Naive thymus-derived CD4-positive, alpha-beta T cell (primary cell): ENCODE measurements at regions of chr14 and their contacts with region 1.

Region 1: GRCh38 chr14:68788996-68789820 is 3.7 kb downstream of the ZFP36L1 start:
- DNase-seq: peak; percentile 70 to 91 (median 88)
- ATAC-seq: peak; percentile 64
- H3K4me3 ChIP-seq: peak overlapping the region; percentile 91
- H3K4me3 Mint-ChIP-seq: peak overlapping the region; percentile 92 to 99 (median 95)
- H3K27ac ChIP-seq: peak overlapping the region; percentile 100
- H3K27ac Mint-ChIP-seq: peak overlapping the region; percentile 91 to 100 (median 99)
- H3K4me1 ChIP-seq: peaks cover 37 to 43% of the 10 kb centered on the region in 2 donors
- H3K4me1 Mint-ChIP-seq: peaks cover 43 to 61% (median 50%) of the 10 kb centered on the region in 7 donors
- H3K27me3 ChIP-seq: no peaks in the 10 kb centered on the region
- H3K27me3 Mint-ChIP-seq: peaks cover 0 to 2% (median 0%) of the 10 kb centered on the region in 5 donors

Region 2: GRCh38 chr14:67446120-67447032 is 1342.8 kb before region 1 on chr14:
- CTCF ChIA-PET with region 1: no interaction called
- POLR2A ChIA-PET with region 1: no interaction called
- intact Hi-C with region 1: no loop called
- DNase-seq: no peak
- ATAC-seq: no peak
- H3K4me3 ChIP-seq: no peak overlapping the region
- H3K4me3 Mint-ChIP-seq: no peak overlapping the region
- H3K27ac ChIP-seq: no peak overlapping the region
- H3K27ac Mint-ChIP-seq: no peak overlapping the region
- H3K4me1 ChIP-seq: no peaks in the 10 kb centered on the region
- H3K4me1 Mint-ChIP-seq: no peaks in the 10 kb centered on the region
- H3K27me3 ChIP-seq: no peaks in the 10 kb centered on the region
- H3K27me3 Mint-ChIP-seq: peaks cover 0 to 34% (median 3%) of the 10 kb centered on the region in 5 donors

Region 3: GRCh38 chr14:68261092-68261842 is 527.9 kb before region 1 on chr14:
- CTCF ChIA-PET with region 1: interaction called, 219 read pairs
- POLR2A ChIA-PET with region 1: interaction called, 203 read pairs
- intact Hi-C with region 1: no loop called
- DNase-seq: peak in 4 of 9 donors; percentile 23 to 32 (median 29)
- ATAC-seq: peak; percentile 41
- H3K4me3 ChIP-seq: peak overlapping the region; percentile 10
- H3K4me3 Mint-ChIP-seq: peak overlapping the region in 9 of 10 donors; percentile 59 to 83 (median 75)
- H3K27ac ChIP-seq: peak overlapping the region; percentile 64
- H3K27ac Mint-ChIP-seq: peak overlapping the region; percentile 73 to 99 (median 92)
- H3K4me1 ChIP-seq: peaks cover 0 to 49% of the 10 kb centered on the region in 2 donors
- H3K4me1 Mint-ChIP-seq: peaks cover 41 to 85% (median 80%) of the 10 kb centered on the region in 7 donors
- H3K27me3 ChIP-seq: no peaks in the 10 kb centered on the region
- H3K27me3 Mint-ChIP-seq: no peaks in the 10 kb centered on the region

Region 4: GRCh38 chr14:68377459-68377858 is 411.7 kb before region 1 on chr14:
- CTCF ChIA-PET with region 1: interaction called, 16 read pairs
- POLR2A ChIA-PET with region 1: interaction called, 13 read pairs
- intact Hi-C with region 1: loop called in 1 of 2 experiments (anchors 1 kb)
- DNase-seq: no peak
- ATAC-seq: peak; percentile 62
- H3K4me3 ChIP-seq: no peak overlapping the region
- H3K4me3 Mint-ChIP-seq: peak overlapping the region in 7 of 10 donors; percentile 29 to 72 (median 59)
- H3K27ac ChIP-seq: peak overlapping the region; percentile 37
- H3K27ac Mint-ChIP-seq: peak overlapping the region in 7 of 9 donors; percentile 69 to 89 (median 81)
- H3K4me1 ChIP-seq: peaks cover 0 to 38% of the 10 kb centered on the region in 2 donors
- H3K4me1 Mint-ChIP-seq: peaks cover 30 to 84% (median 72%) of the 10 kb centered on the region in 7 donors
- H3K27me3 ChIP-seq: no peaks in the 10 kb centered on the region
- H3K27me3 Mint-ChIP-seq: no peaks in the 10 kb centered on the region

Region 5: DNA sequence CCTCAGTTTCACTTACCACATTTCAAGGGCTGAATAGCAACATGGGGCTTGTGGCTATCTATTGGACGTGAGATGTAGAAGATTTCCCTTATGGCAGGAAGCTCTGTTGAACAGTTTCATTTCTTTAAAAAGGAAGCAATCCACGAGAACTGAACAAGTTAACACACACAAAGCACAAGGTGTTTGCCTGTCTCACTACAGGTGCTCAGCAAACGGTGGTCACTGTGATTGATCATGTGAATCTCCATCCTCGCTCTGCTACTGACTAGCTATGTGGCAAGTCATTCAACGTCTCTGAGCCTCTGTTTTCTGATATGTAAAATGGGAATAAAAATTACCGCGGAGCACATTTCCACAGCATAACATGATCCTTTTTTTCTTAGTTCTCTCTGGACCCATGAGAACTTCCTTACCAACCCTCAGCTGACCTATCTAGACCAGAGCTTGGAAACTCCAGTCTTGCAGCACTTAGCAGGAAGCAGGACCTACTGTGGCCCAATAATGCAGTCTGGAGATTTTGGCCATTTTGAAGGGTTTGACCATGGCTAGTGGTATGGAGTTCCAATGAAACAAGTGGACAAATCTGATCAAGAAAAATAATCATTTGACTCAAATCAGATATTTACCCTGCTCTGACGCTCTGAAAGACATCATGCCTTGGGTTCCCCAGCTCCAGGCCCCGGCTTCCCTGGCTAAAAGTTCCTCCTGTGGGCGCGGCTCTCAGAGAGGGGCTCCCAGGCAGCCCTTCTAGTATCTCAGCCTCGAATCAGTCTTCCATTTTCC is 275.2 kb before region 1 on chr14:
- CTCF ChIA-PET with region 1: no interaction called
- POLR2A ChIA-PET with region 1: interaction called, 149 read pairs
- intact Hi-C with region 1: no loop called
- DNase-seq: no peak
- ATAC-seq: peak; percentile 48
- H3K4me3 ChIP-seq: no peak overlapping the region
- H3K4me3 Mint-ChIP-seq: peak overlapping the region in 1 of 10 donors; percentile 64
- H3K27ac ChIP-seq: no peak overlapping the region
- H3K27ac Mint-ChIP-seq: peak overlapping the region in 6 of 9 donors; percentile 3 to 69 (median 49)
- H3K4me1 ChIP-seq: peaks cover 0 to 29% of the 10 kb centered on the region in 2 donors
- H3K4me1 Mint-ChIP-seq: peaks cover 10 to 79% (median 61%) of the 10 kb centered on the region in 7 donors
- H3K27me3 ChIP-seq: no peaks in the 10 kb centered on the region
- H3K27me3 Mint-ChIP-seq: no peaks in the 10 kb centered on the region

Region 6: DNA sequence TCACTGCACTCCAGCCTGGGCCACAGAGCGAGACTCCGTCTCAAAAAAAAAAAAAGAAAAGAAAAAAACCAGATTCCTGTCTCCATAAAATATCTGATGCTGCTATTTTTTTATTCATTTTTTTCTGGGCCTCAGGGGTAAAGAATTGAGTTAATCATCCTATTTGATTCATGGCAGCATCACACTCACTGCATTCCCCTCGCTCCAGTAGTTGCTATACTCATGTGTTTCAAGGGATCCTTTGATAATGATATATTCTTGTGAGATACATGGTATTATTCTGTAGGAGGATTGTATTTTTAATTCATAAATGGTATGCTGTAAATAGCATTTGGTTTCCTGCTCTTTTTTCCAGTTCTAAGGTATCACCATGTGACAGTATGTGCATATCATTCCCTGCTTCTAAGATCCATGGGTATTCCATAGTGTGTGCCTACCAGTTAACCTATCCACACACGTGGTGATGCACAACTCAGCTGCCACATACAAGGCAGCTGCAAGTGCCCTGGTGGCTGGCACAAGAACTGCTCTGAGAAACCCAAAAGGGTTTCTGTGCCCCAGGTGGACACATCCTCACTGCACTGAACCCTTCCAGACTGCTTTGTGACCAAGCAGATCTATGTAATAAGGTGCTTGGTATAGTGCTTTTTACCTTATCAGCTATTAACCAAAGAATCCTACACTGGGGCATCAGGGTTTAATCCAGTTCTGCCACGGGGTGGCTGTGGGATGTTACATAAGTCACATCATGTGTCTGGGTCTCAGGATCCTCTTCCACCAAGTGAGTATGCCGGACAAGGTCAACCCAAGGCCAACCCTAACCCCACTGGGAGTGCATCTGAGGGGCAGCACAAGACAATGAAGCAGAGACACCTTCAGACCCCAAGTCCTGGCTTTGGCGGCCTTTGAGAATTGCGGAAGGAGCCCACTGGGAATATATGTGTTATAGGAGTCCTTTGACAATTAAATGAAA is 70.9 kb before region 1 on chr14:
- CTCF ChIA-PET with region 1: no interaction called
- POLR2A ChIA-PET with region 1: interaction called, 4 read pairs
- intact Hi-C with region 1: loop called in 1 of 2 experiments (anchors 5 kb)
- DNase-seq: no peak
- ATAC-seq: no peak
- H3K4me3 ChIP-seq: no peak overlapping the region
- H3K4me3 Mint-ChIP-seq: no peak overlapping the region
- H3K27ac ChIP-seq: no peak overlapping the region
- H3K27ac Mint-ChIP-seq: peak overlapping the region in 1 of 9 donors; percentile 19
- H3K4me1 ChIP-seq: peaks cover 3 to 27% of the 10 kb centered on the region in 2 donors
- H3K4me1 Mint-ChIP-seq: peaks cover 14 to 42% (median 25%) of the 10 kb centered on the region in 7 donors
- H3K27me3 ChIP-seq: no peaks in the 10 kb centered on the region
- H3K27me3 Mint-ChIP-seq: no peaks in the 10 kb centered on the region

Region 7: GRCh38 chr14:68843471-68844209 is 54.4 kb after region 1 on chr14:
- CTCF ChIA-PET with region 1: interaction called, 6 read pairs
- POLR2A ChIA-PET with region 1: interaction called, 3 read pairs
- intact Hi-C with region 1: loop called in 1 of 2 experiments (anchors 1 kb)
- DNase-seq: peak; percentile 42 to 76 (median 68)
- ATAC-seq: peak; percentile 86
- H3K4me3 ChIP-seq: no peak overlapping the region
- H3K4me3 Mint-ChIP-seq: peak overlapping the region in 9 of 10 donors; percentile 30 to 62 (median 48)
- H3K27ac ChIP-seq: no peak overlapping the region
- H3K27ac Mint-ChIP-seq: peak overlapping the region in 3 of 9 donors; percentile 12 to 47 (median 29)
- H3K4me1 ChIP-seq: peaks cover 7 to 12% of the 10 kb centered on the region in 2 donors
- H3K4me1 Mint-ChIP-seq: peaks cover 12 to 34% (median 15%) of the 10 kb centered on the region in 7 donors
- H3K27me3 ChIP-seq: no peaks in the 10 kb centered on the region
- H3K27me3 Mint-ChIP-seq: peaks cover 0 to 9% (median 0%) of the 10 kb centered on the region in 5 donors

Region 8: GRCh38 chr14:68853737-68854136 is 64.5 kb after region 1 on chr14:
- CTCF ChIA-PET with region 1: no interaction called
- POLR2A ChIA-PET with region 1: no interaction called
- intact Hi-C with region 1: no loop called
- DNase-seq: no peak
- ATAC-seq: no peak
- H3K4me3 ChIP-seq: no peak overlapping the region
- H3K4me3 Mint-ChIP-seq: peak overlapping the region in 1 of 10 donors; percentile 53
- H3K27ac ChIP-seq: no peak overlapping the region
- H3K27ac Mint-ChIP-seq: no peak overlapping the region
- H3K4me1 ChIP-seq: no peaks in the 10 kb centered on the region
- H3K4me1 Mint-ChIP-seq: peaks cover 0 to 12% (median 0%) of the 10 kb centered on the region in 7 donors
- H3K27me3 ChIP-seq: no peaks in the 10 kb centered on the region
- H3K27me3 Mint-ChIP-seq: peaks cover 0 to 3% (median 0%) of the 10 kb centered on the region in 5 donors

Region 9: GRCh38 chr14:69055999-69056788 is 267.0 kb after region 1 on chr14:
- CTCF ChIA-PET with region 1: no interaction called
- POLR2A ChIA-PET with region 1: no interaction called
- intact Hi-C with region 1: no loop called
- DNase-seq: peak in 7 of 9 donors; percentile 8 to 51 (median 27)
- ATAC-seq: peak; percentile 59
- H3K4me3 ChIP-seq: no peak overlapping the region
- H3K4me3 Mint-ChIP-seq: no peak overlapping the region
- H3K27ac ChIP-seq: no peak overlapping the region
- H3K27ac Mint-ChIP-seq: peak overlapping the region; percentile 3 to 73 (median 32)
- H3K4me1 ChIP-seq: no peaks in the 10 kb centered on the region
- H3K4me1 Mint-ChIP-seq: peaks cover 16 to 33% (median 25%) of the 10 kb centered on the region in 7 donors
- H3K27me3 ChIP-seq: no peaks in the 10 kb centered on the region
- H3K27me3 Mint-ChIP-seq: no peaks in the 10 kb centered on the region